ENCODE measurements at regions of chr9 and their contacts with region 1.

Region 1: GRCh38 chr9:92223758-92224157 is 69.7 kb downstream of the IARS1 start:
- DNase-seq: no peak
- ATAC-seq: no peak
- H3K4me3 ChIP-seq: no peak overlapping the region
- H3K27ac ChIP-seq: no peak overlapping the region
- H3K4me1 ChIP-seq: no peaks in the 10 kb centered on the region
- H3K27me3 ChIP-seq: no peaks in the 10 kb centered on the region
- CTCF ChIP-seq: no peak

Region 2: GRCh38 chr9:92140074-92140753 is 83.5 kb before region 1 on chr9:
- intact Hi-C with region 1: loop called in 1 of 2 experiments (anchors 10 kb)
- DNase-seq: peak; percentile 73 to 88
- ATAC-seq: peak; percentile 66 to 89 (median 80)
- H3K4me3 ChIP-seq: peak overlapping the region; percentile 52
- H3K27ac ChIP-seq: no peak overlapping the region
- H3K4me1 ChIP-seq: no peaks in the 10 kb centered on the region
- H3K27me3 ChIP-seq: peaks cover 0 to 24% (median 11%) of the 10 kb centered on the region in 3 donors
- CTCF ChIP-seq: peak; percentile 86